Panc1 (cell line): ENCODE measurements at regions of chr1 and their contacts with region 1.

Region 1: DNA sequence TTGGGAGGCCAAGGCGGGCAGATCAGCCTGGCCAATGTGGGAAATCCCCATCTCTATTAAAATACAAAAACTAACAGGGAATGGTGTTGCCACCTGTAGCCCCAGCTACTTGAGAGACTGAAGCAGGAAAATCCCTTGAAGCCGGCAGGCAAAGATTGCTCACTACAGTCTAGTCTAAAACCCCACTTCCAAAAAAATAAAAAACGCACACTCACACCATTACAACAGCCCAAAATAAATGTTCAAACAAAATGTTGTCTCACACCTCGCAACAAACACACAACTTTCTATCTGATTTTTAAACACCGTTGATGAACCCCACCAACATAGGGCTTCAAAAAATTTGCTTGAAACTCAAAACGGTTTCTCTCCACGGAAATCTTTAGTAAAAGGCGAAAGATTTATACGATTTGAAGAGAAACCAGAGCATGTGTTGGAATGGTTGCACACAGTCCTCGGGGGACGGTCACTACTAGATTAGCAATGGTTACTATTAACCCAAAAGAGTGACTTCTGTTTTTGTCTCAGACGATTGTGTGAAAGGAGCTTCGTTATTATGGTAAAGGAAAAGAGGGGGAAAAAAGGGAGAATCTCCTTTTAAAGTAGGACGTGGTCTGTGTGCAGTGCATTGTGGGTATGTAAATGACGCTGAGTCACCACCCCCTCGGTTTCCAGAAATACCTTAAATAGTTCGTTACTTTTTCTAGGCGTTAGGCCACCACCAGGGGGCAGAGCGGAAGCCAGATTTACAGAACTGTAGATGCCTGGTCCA is at the start of gene RNU5D-1:
- DNase-seq: peak; percentile 99
- ATAC-seq: peak; percentile 91
- H3K4me3 ChIP-seq: peak within 1 kb of the TSS; percentile 9 to 38; a peak in 3 of 4 replicates
- H3K27ac ChIP-seq: peak within 1 kb of the TSS; percentile 97
- H3K4me1 ChIP-seq: peaks cover 5% of the 10 kb centered on the region; the same call in 1 of the 2 replicates
- H3K27me3 ChIP-seq: no peaks in the 10 kb centered on the region
- CTCF ChIP-seq: peak; percentile 96
- total RNA-seq, gene RNU5D-1: not detected

Region 2: DNA sequence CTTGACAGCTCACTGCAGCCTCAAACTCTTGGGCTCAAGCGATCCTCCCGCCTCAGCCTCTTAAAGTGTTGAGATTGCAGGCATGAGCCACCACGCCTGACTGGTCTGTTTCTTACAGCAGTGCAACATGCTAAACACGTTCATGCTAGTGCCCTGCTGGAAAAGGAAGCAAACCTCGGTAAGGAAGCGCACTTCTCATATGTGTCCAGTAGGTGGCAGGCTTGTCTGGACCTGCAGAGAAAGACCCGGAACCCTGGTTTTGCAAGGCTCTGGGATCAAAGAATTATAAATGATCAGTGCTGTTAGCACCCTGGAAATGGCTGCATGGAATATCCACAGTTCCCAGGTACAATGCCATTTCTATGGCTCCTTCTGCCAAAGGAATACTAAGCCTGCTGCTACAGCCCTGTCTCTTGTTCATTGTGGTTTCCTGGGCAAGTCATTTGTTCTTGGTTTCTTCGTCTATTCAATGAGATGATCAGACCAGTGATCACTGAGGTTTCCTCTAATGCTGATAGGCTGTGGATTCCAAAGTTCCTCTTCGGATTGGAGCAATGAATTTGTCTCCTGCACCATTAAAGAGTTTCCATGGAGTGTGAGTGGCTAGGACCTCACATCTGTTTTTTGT is 15.9 kb before region 1 on chr1:
- CTCF ChIA-PET with region 1: no interaction called
- POLR2A ChIA-PET with region 1: interaction called, 14 read pairs
- in situ Hi-C with region 1: no loop called
- intact Hi-C with region 1: no loop called
- DNase-seq: peak; percentile 71
- ATAC-seq: peak; percentile 91
- H3K4me3 ChIP-seq: no peak overlapping the region
- H3K27ac ChIP-seq: no peak overlapping the region; the same call in 1 of the 2 replicates
- H3K4me1 ChIP-seq: no peaks in the 10 kb centered on the region
- H3K27me3 ChIP-seq: peaks cover 3% of the 10 kb centered on the region; the same call in 1 of the 2 replicates
- CTCF ChIP-seq: peak; percentile 97

Region 3: DNA sequence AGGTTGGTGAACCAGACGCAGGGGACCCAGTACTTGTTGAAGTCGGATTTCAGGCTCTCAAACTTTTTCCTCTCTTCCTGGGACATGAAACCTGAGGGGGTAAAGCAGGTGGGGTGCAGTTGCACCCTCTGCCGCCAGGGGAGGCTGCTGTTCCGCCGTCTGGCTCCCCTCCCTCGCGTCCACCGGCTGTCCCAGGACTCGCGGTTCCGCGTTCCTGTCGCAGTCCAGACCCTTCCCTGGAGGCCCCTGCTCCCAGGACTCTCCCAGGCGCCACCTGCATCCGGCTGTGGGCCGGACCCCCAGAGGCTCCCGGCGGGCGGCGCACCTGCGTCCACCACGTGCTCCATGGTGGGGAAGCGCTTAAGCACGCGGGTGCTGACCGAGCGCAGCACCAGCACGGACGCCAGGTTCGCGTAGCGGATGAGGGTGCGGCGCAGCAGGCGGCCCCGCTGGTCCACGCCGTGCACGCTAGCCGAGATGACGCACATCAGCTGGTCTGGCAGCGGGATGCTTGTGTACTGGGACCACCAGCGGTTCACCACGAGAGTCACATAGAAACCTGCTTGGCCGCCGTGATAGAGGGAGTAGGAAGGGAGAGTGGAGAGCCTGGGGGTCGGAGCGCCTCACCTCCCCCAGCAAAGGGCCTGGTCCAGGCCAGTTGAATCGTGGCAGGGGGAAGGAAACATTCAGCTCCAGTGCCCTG is 55.4 kb after region 1 on chr1:
- CTCF ChIA-PET with region 1: no interaction called
- POLR2A ChIA-PET with region 1: interaction called, 11 read pairs
- in situ Hi-C with region 1: no loop called
- intact Hi-C with region 1: no loop called
- DNase-seq: no peak
- ATAC-seq: peak; percentile 29; the same call in 1 of the 2 replicates
- H3K4me3 ChIP-seq: no peak overlapping the region
- H3K27ac ChIP-seq: no peak overlapping the region
- H3K4me1 ChIP-seq: no peaks in the 10 kb centered on the region; the same call in 1 of the 2 replicates
- H3K27me3 ChIP-seq: no peaks in the 10 kb centered on the region
- CTCF ChIP-seq: peak; percentile 90

Region 4: DNA sequence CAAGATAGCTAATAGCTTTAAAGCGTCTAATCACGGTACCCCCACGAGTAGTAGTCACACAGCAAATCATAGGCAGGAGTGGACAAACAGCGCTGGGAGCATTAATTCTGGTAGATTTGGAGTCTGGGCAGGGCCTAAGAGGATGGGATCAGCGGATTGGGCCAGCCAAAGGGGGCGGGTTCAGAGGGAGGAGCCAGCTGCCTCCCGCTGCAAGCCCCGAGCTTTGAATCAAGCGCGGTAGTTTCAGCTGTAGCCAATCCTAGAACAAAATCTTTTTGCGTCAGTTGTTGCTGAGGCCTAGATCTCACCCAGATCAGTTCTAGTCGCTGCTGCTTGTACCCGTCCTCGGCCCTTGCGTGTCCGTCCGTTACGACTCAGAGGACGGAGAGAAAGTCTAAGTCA is 852.3 kb after region 1 on chr1:
- CTCF ChIA-PET with region 1: no interaction called
- POLR2A ChIA-PET with region 1: interaction called, 11 read pairs
- in situ Hi-C with region 1: no loop called
- intact Hi-C with region 1: no loop called
- DNase-seq: peak; percentile 97
- ATAC-seq: peak; percentile 91
- H3K4me3 ChIP-seq: peak overlapping the region; percentile 89 to 98
- H3K27ac ChIP-seq: peak overlapping the region; percentile 90
- H3K4me1 ChIP-seq: peaks cover 8% of the 10 kb centered on the region; the same call in 1 of the 2 replicates
- H3K27me3 ChIP-seq: no peaks in the 10 kb centered on the region
- CTCF ChIP-seq: no peak